AG04450 (cell line): ENCODE measurements at regions of chr10 and their contacts with region 1.

Region 1: GRCh38 chr10:11525503-11525902 is 85.9 kb downstream of the USP6NL start:
- DNase-seq: no peak
- H3K4me3 ChIP-seq: no peak overlapping the region
- H3K27ac ChIP-seq: no peak overlapping the region
- H3K27me3 ChIP-seq: no peaks in the 10 kb centered on the region
- CTCF ChIP-seq: no peak

Region 2: GRCh38 chr10:11448545-11449244 is 76.8 kb before region 1 on chr10:
- CTCF ChIA-PET with region 1: no interaction called
- POLR2A ChIA-PET with region 1: no interaction called
- DNase-seq: no peak
- H3K4me3 ChIP-seq: no peak overlapping the region
- H3K27ac ChIP-seq: no peak overlapping the region
- H3K27me3 ChIP-seq: peaks cover 8% of the 10 kb centered on the region
- CTCF ChIP-seq: no peak

Region 3: DNA sequence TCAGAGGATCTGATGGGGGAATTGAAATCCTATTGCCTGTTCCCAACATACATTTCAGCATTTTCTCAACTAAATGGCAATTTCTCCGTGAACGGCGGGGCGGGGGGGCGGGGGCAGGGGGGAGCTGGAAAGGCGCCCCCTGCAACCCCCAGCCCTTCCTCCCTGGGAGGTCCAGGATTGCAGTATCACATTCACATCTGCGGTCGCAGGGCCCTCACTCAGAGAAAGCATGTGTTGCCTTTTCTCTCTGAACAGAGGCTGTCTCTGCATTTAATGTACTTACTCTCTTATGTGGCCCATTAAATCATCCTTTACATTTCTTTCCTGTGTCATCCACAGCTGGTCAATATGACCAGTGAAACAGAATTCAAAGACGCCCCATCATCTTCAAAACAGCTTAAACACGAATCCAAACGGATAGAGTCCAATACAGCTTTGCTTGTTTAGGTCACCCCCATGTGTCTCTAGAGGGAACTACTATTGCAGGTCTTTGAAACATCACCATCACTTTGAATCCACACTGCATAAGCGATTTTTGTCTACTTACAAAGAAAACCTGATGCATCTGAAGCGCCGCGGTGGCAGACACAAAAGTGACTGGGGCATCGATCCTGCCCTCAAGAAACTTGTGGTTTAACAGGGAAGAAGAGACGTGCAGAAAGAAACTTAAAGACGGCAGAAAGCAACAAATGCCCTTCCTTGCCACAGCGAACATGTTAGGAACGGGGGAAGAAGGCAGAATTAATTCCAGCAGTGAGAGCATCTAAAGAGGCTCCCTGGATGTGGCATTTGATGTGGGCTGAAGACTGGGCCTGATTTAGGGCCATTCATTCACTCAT is 199.7 kb after region 1 on chr10:
- CTCF ChIA-PET with region 1: interaction called, 21 read pairs
- POLR2A ChIA-PET with region 1: no interaction called
- DNase-seq: peak; percentile 49
- H3K4me3 ChIP-seq: no peak overlapping the region
- H3K27ac ChIP-seq: no peak overlapping the region
- H3K27me3 ChIP-seq: peaks cover 3% of the 10 kb centered on the region
- CTCF ChIP-seq: peak; percentile 90

Region 4: GRCh38 chr10:12036073-12036655 is 510.7 kb after region 1 on chr10:
- CTCF ChIA-PET with region 1: no interaction called
- POLR2A ChIA-PET with region 1: no interaction called
- DNase-seq: no peak
- H3K4me3 ChIP-seq: no peak overlapping the region
- H3K27ac ChIP-seq: no peak overlapping the region
- H3K27me3 ChIP-seq: no peaks in the 10 kb centered on the region
- CTCF ChIP-seq: no peak